ENCODE measurements at regions of chr12 and their contacts with region 1.

Region 1: GRCh38 chr12:59087077-59087673 is 166.9 kb upstream of the LRIG3 start:
- DNase-seq: no peak
- H3K4me3 ChIP-seq: no peak overlapping the region
- H3K27ac ChIP-seq: no peak overlapping the region
- H3K27me3 ChIP-seq: no peaks in the 10 kb centered on the region
- CTCF ChIP-seq: peak; percentile 80

Region 2: DNA sequence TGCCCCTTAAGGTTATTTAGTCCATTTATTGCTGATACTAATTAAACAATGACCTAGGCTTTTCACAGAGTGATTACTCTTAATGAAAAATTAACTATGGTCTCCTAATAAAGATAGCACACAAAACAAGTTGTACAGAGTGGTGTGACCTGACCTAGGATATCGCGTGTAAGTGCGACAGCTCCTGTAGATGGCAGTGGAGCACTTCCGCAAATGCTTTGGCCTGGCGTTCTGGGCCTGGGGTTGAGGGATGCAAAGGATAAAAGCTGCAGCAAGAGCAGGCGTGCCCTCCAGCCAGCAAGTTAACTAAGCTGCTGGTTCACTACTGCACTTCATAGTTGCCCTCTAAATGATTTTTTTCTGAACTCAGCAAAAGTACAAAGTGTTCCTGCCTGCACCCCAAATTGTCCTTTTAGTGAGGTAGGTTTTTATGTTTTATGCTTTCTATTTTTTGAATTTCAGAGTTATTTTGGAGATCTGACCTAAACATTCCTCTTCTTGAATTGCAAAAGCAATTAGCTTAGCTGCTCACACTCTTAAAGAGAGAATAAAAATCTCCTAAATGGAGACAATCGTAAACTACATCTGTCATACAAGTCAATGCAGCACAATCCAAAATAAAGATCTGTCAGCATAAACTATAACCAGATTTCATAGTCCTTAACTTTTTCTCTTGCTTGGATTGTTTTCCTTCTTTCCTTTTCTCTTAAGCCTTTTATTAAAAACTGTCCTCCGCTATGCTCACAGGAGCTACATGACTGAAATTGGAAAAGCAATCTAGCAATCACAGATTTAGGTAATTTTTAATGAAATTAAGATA is 546.5 kb before region 1 on chr12:
- in situ Hi-C with region 1: loop called (anchors 25 kb)
- DNase-seq: peak; percentile 86
- H3K4me3 ChIP-seq: no peak overlapping the region
- H3K27ac ChIP-seq: peak overlapping the region; percentile 25
- H3K27me3 ChIP-seq: no peaks in the 10 kb centered on the region
- CTCF ChIP-seq: peak; percentile 93

Region 3: GRCh38 chr12:59234391-59234790 is 147.2 kb after region 1 on chr12:
- in situ Hi-C with region 1: no loop called
- DNase-seq: no peak
- H3K4me3 ChIP-seq: no peak overlapping the region
- H3K27ac ChIP-seq: no peak overlapping the region
- H3K27me3 ChIP-seq: no peaks in the 10 kb centered on the region
- CTCF ChIP-seq: no peak

Measured in brain microvascular endothelial cell (primary cell).